Activated CD4-positive, alpha-beta memory T cell treated with anti-CD3 and anti-CD28 coated beads for 36 hours (primary cell): ENCODE measurements at regions of chr19 and their contacts with region 1.

Region 1: GRCh38 chr19:50357178-50358100 is 8.0 kb downstream of the NAPSA start:
- DNase-seq: peak; percentile 92
- H3K4me3 Mint-ChIP-seq: peak overlapping the region; percentile 81
- H3K27ac Mint-ChIP-seq: peak overlapping the region; percentile 93
- H3K4me1 Mint-ChIP-seq: peaks cover 53% of the 10 kb centered on the region
- H3K27me3 Mint-ChIP-seq: no peaks in the 10 kb centered on the region

Region 2: DNA sequence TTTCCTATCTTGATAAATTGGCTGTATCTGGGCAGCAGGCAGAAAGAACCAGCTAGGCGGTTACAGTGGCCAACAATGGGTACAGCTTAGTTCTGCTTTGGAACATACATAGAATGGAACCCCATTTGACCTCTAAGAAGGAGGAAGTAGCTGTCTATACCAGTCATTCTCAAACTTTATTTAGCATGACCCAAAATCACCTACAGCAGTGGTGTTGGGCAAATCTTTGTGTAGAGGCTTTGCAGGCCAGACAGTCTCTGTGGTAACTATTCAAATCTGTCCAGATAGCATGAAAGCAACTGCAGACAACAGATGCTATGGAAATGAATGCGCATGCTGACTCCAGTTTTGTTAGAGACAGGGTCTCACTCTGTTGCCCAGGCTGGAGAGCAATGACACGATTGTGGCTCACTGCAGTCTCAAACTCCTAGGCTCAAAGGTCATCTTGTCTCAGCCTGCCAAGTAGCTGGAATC is 16.3 kb before region 1 on chr19:
- CTCF ChIA-PET with region 1: interaction called, 10 read pairs
- POLR2A ChIA-PET with region 1: no interaction called
- intact Hi-C with region 1: no loop called
- DNase-seq: peak; percentile 26
- H3K4me3 Mint-ChIP-seq: no peak overlapping the region
- H3K27ac Mint-ChIP-seq: no peak overlapping the region
- H3K4me1 Mint-ChIP-seq: peaks cover 20% of the 10 kb centered on the region
- H3K27me3 Mint-ChIP-seq: no peaks in the 10 kb centered on the region

Region 3: DNA sequence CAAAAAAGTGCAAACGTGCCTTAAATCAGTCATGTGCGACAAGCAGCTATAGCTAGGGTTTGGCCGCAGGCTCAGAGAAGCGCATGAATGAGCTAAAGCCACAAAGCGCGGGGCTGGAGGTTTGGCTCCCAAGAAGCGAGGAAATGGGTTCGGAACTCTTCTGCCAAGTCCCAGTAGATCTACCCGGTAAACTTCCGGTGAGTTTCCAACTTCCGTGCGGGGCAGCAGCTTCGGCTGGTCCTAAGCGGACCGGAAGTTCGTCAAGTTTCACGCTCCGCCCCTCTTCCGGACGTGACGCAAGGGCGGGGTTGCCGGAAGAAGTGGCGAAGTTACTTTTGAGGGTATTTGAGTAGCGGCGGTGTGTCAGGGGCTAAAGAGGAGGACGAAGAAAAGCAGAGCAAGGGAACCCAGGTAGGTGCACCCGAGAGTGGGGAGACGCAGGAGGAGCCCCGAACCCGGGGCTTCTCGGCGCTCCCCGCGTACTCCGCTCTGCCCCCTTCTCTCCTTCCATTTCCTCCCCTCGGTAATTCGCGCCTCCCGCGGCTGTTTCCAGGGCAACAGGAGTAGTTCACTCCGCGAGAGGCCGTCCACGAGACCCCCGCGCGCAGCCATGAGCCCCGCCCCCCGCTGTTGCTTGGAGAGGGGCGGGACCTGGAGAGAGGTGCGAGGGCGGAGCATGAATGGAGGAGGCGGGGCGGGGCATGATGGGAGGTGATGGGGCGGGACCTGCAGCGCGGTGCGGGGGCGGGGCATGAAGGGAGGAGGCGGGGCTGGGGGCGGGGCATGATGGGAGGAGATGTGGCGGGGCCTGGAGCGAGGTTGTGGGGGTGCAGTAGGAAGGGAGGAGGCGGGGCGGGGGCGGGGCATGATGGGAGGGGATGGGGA is 19.0 kb after region 1 on chr19 and contains the start of gene NR1H2:
- CTCF ChIA-PET with region 1: interaction called, 18 read pairs
- POLR2A ChIA-PET with region 1: interaction called, 5 read pairs
- intact Hi-C with region 1: loop called (anchors 1 kb)
- DNase-seq: peak; percentile 96
- H3K4me3 Mint-ChIP-seq: peak within 1 kb of the TSS; percentile 91
- H3K27ac Mint-ChIP-seq: peak within 1 kb of the TSS; percentile 98
- H3K4me1 Mint-ChIP-seq: peaks cover 21% of the 10 kb centered on the region
- H3K27me3 Mint-ChIP-seq: no peaks in the 10 kb centered on the region
- total RNA-seq, gene NR1H2: 73.9 to 75.6 TPM

Region 4: GRCh38 chr19:50414864-50415660 is 57.6 kb after region 1 on chr19:
- CTCF ChIA-PET with region 1: interaction called, 26 read pairs
- POLR2A ChIA-PET with region 1: interaction called, 3 read pairs
- intact Hi-C with region 1: loop called (anchors 1 kb)
- DNase-seq: peak; percentile 81
- H3K4me3 Mint-ChIP-seq: no peak overlapping the region
- H3K27ac Mint-ChIP-seq: no peak overlapping the region
- H3K4me1 Mint-ChIP-seq: peaks cover 3% of the 10 kb centered on the region
- H3K27me3 Mint-ChIP-seq: peaks cover 12% of the 10 kb centered on the region

Region 5: DNA sequence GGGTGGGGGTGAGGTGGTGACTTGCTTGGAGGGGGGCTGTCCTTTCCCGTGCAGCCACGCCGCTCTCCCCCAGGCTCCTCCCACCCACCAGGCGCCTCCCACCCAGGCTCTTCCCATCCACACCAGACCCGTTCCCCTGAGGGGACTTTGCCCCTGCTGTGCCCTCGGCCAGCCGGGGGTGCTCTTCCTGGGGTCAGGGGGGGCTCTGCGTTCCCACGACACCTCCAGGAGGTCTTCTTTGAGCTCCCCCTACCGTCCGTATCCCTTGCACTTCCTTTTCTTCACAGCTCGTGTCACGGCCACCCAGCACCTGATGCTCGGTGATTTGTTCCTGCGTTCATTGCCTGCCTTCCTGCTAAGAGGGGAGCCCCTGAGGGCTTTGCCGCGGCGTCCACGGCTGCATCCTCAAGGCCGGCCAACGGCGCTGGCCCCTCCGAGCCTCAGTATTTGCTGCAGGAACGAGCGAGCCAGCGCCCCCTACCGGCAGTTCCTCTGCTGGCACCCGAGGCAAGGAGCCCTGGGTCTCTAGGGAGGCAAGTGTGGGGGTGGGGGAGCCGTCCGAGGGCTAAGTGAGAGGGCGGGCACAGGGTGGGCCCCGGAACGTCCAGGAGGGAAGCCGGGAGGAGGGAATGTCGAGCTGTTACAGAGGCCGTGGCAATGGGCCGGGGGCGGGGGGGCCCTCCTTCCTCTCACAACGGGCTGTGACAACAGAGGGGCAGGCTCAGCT is 199.0 kb after region 1 on chr19:
- CTCF ChIA-PET with region 1: interaction called, 15 read pairs
- POLR2A ChIA-PET with region 1: no interaction called
- intact Hi-C with region 1: loop called (anchors 5 kb)
- DNase-seq: peak; percentile 86
- H3K4me3 Mint-ChIP-seq: peak overlapping the region; percentile 81
- H3K27ac Mint-ChIP-seq: no peak overlapping the region
- H3K4me1 Mint-ChIP-seq: peaks cover 8% of the 10 kb centered on the region
- H3K27me3 Mint-ChIP-seq: peaks cover 57% of the 10 kb centered on the region

Region 6: DNA sequence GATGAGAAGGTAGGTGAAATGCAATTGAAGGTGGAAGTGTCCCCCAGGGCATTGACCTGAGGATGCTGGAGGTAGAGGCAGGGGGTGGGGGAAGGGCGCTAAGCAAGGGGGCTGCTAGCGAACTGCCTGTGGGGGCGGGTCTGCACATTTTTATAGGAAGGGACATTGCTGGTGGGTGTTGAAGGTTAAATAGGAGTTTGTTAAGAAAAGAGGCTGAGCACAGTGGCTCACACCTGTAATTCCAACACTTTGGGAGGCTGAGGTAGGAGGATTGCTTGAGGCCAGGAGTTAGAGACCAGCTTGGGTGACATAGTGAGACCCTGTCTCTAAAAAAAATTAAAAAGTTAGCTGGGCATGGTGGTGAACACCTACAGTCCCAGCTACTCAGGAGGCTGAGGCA is 427.3 kb after region 1 on chr19:
- CTCF ChIA-PET with region 1: interaction called, 12 read pairs
- POLR2A ChIA-PET with region 1: no interaction called
- intact Hi-C with region 1: loop called (anchors 5 kb)
- DNase-seq: no peak
- H3K4me3 Mint-ChIP-seq: no peak overlapping the region
- H3K27ac Mint-ChIP-seq: no peak overlapping the region
- H3K4me1 Mint-ChIP-seq: peaks cover 2% of the 10 kb centered on the region
- H3K27me3 Mint-ChIP-seq: peaks cover 17% of the 10 kb centered on the region